ENCODE measurements at regions of chr16 and their contacts with region 1.

Region 1: GRCh38 chr16:19555162-19555937 is at the start of gene VPS35L:
- DNase-seq: peak; percentile 90 to 99 (median 94)
- ATAC-seq: peak; percentile 94 to 98 (median 96)
- H3K4me3 ChIP-seq: peak within 1 kb of the TSS; percentile 69 to 96
- H3K4me3 Mint-ChIP-seq: peak within 1 kb of the TSS; percentile 94 to 95 (median 95)
- H3K27ac ChIP-seq: peak within 1 kb of the TSS; percentile 76
- H3K27ac Mint-ChIP-seq: peak within 1 kb of the TSS; percentile 84 to 96
- H3K4me1 ChIP-seq: peaks cover 0 to 17% of the 10 kb centered on the region in 2 experiments
- H3K4me1 Mint-ChIP-seq: peaks cover 21 to 29% (median 26%) of the 10 kb centered on the region in 3 donors
- H3K27me3 ChIP-seq: no peaks in the 10 kb centered on the region
- H3K27me3 Mint-ChIP-seq: no peaks in the 10 kb centered on the region
- total RNA-seq, gene VPS35L: 40.2 to 46.9 (median 42.9) TPM

Region 2: GRCh38 chr16:19502395-19503131 is 52.8 kb before region 1 on chr16:
- CTCF ChIA-PET with region 1: interaction called, 4 to 10 read pairs
- POLR2A ChIA-PET with region 1: no interaction called
- DNase-seq: peak in 34 of 35 experiments; percentile 5 to 76 (median 46)
- ATAC-seq: peak in 3 of 4 experiments; percentile 38 to 46 (median 46)
- H3K4me3 ChIP-seq: no peak overlapping the region
- H3K4me3 Mint-ChIP-seq: no peak overlapping the region
- H3K27ac ChIP-seq: no peak overlapping the region
- H3K27ac Mint-ChIP-seq: no peak overlapping the region
- H3K4me1 ChIP-seq: no peaks in the 10 kb centered on the region
- H3K4me1 Mint-ChIP-seq: no peaks in the 10 kb centered on the region
- H3K27me3 ChIP-seq: no peaks in the 10 kb centered on the region
- H3K27me3 Mint-ChIP-seq: no peaks in the 10 kb centered on the region

Region 3: DNA sequence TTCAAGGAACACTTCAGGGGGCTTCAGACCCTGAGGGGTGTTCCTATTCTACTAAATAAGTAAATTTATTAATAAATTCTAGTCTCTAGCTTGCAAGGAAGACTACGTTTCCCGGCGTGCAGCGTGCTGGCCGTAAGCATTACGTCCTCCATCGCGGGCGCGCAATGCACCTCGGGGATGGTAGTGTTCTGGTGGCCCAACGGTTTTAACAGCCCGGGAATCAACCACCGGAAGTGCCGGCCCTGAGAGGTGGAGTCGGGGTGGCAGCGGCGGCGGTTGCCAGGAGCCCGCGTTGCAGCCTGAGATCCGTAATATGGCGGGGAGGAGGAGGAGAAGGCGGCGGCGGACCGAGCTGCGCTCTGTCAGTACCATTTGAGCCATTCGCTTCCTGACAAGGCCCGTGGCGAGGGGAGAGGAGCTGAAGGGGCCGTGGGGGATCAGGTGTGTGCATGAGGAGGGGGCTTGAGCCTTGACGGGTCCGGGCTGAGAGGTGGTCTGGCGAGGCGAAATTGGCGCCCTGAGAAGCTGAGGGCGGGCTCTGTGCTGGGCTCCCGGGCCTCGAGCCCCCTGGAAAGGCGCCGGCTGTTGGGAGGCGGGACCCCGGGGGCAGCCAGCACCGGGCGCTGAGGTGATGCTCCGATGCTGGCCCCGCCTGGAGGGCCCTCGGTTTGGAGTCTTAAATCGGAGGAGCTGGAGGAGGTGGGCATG is 31.5 kb before region 1 on chr16 and contains the start of gene CCP110:
- CTCF ChIA-PET with region 1: interaction called, 7 to 47 read pairs
- POLR2A ChIA-PET with region 1: interaction called in 1 of 2 experiments, 7 read pairs
- DNase-seq: peak; percentile 83 to 98 (median 94)
- ATAC-seq: peak; percentile 85 to 88 (median 87)
- H3K4me3 ChIP-seq: peak within 1 kb of the TSS; percentile 77 to 82
- H3K4me3 Mint-ChIP-seq: peak within 1 kb of the TSS; percentile 93 to 99 (median 97)
- H3K27ac ChIP-seq: peak within 1 kb of the TSS; percentile 9
- H3K27ac Mint-ChIP-seq: peak within 1 kb of the TSS; percentile 75 to 95
- H3K4me1 ChIP-seq: peaks cover 21 to 42% of the 10 kb centered on the region in 2 experiments
- H3K4me1 Mint-ChIP-seq: peaks cover 46 to 57% (median 54%) of the 10 kb centered on the region in 3 donors
- H3K27me3 ChIP-seq: no peaks in the 10 kb centered on the region
- H3K27me3 Mint-ChIP-seq: no peaks in the 10 kb centered on the region
- total RNA-seq, gene CCP110: 12.3 to 18.8 (median 17.1) TPM

Region 4: GRCh38 chr16:19907161-19907992 is 352.0 kb after region 1 on chr16:
- CTCF ChIA-PET with region 1: interaction called, 6 to 11 read pairs
- POLR2A ChIA-PET with region 1: no interaction called
- DNase-seq: peak; percentile 40 to 80 (median 62)
- ATAC-seq: peak; percentile 95 to 98 (median 97)
- H3K4me3 ChIP-seq: peak overlapping the region in 1 of 2 donors; percentile 17
- H3K4me3 Mint-ChIP-seq: peak overlapping the region; percentile 39 to 55 (median 55)
- H3K27ac ChIP-seq: no peak overlapping the region
- H3K27ac Mint-ChIP-seq: peak overlapping the region in 1 of 2 donors; percentile 44
- H3K4me1 ChIP-seq: peaks cover 0 to 8% of the 10 kb centered on the region in 2 experiments
- H3K4me1 Mint-ChIP-seq: peaks cover 9 to 11% (median 9%) of the 10 kb centered on the region in 3 donors
- H3K27me3 ChIP-seq: peaks cover 0 to 11% of the 10 kb centered on the region in 2 experiments
- H3K27me3 Mint-ChIP-seq: peaks cover 14 to 17% of the 10 kb centered on the region in 2 donors

Measured in T-cell (primary cell).